ENCODE measurements at regions of chr11 and their contacts with region 1.

Region 1: DNA sequence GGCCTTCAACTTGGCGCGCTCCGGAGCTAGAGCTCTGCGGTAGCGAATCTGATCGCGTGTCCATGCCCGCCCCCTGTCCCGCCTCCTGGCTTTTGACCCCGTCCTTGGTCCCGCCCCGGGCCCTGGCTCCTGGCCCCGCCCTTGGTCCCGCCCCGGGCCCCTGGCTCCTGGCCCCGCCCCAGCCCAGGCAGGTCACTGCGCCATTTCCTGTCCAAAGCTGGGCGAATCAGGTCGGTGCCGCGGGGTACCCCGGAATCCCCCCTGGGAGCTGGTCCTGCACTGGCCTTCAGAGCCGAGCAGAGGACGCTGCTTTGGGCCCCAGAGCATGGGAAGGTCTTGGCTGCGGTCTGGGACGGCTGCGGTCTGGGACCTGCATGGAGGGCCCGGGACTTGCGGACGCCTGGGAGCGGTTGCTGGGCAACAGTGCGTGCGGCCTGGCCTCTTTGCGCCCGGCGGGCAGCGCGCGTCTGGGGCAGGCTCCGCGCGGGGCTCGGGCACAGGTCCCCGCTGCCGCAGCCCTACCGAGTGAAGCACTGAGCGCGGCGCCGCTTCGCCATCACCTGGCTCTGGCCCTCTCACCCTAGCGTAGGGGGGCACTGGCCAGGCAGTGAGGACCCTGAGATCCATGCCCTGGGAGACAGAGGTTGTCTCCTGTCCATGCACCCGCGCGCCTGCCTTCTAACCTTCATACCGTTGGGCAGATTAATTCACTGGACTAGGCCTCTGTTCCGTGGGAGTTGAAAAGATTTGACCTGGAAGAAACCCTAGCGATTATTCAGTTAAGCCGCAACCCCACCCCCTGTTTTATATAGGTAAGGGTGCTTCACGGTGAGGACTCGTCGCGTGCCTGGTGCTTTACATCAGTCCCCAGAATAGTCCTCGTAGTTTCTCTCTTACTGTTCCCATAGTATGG is at the start of gene TTC12:
- DNase-seq: peak; percentile 81 to 95 (median 89)
- ATAC-seq: peak; percentile 100
- H3K4me3 ChIP-seq: peak within 1 kb of the TSS; percentile 78
- H3K4me3 Mint-ChIP-seq: peak within 1 kb of the TSS; percentile 77 to 93 (median 88)
- H3K27ac ChIP-seq: peak within 1 kb of the TSS; percentile 91
- H3K27ac Mint-ChIP-seq: peak within 1 kb of the TSS; percentile 75 to 95 (median 92)
- H3K4me1 ChIP-seq: peaks cover 10 to 16% of the 10 kb centered on the region in 2 donors
- H3K4me1 Mint-ChIP-seq: peaks cover 18 to 58% (median 49%) of the 10 kb centered on the region in 7 donors
- H3K27me3 ChIP-seq: no peaks in the 10 kb centered on the region
- H3K27me3 Mint-ChIP-seq: peaks cover 0 to 3% (median 0%) of the 10 kb centered on the region in 5 donors
- total RNA-seq, gene TTC12: 14.1 to 84.5 (median 58.2) TPM

Region 2: DNA sequence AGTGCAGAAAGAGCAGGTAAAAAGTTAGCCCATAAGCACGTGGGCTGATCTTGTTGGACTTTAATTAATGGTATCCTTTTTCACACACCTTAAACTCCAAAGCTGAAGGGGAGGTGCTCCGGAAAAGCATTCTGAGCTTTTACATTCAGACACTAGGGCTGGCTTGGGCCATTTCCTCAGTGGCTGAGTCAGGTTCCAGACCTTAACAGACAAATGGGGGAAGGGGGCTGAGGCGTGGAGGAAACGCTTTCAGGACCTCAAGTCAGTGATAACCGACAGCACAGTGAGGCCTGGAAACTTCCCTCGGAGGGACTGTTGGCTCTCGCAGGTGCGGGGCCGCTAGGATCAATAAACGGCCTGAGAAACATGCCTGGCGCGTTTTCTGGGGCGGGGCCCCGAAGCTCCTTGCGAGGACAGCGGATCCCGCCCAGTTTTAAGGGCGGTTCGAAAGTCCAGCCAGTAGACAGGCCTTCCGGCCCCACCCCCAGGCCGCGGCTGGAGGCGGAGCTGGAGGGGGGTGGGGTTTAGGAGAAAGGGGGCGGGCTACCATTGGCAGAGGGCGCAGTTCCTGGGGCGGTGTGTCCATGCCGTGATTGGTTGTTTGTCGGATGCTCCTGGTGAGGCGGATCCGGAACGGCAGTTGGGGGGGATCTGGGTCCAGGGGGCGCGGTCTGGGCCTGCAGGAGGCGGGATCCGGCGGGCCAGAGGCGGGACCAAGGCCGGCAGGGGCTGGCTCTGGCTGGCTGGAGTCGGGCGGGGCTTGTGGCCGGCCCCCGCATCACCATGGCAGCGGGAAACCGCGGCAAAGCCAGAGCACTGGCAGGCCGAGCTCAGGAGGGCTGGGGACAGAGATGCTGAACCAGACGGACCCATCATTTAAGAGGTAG is 1387.9 kb before region 1 on chr11:
- CTCF ChIA-PET with region 1: no interaction called
- POLR2A ChIA-PET with region 1: no interaction called
- intact Hi-C with region 1: loop called in 1 of 2 experiments (anchors 5 kb)
- DNase-seq: peak; percentile 91 to 98 (median 96)
- ATAC-seq: peak; percentile 96
- H3K4me3 ChIP-seq: peak overlapping the region; percentile 61
- H3K4me3 Mint-ChIP-seq: peak overlapping the region; percentile 76 to 91 (median 87)
- H3K27ac ChIP-seq: peak overlapping the region; percentile 76
- H3K27ac Mint-ChIP-seq: peak overlapping the region; percentile 83 to 96 (median 92)
- H3K4me1 ChIP-seq: peaks cover 0 to 5% of the 10 kb centered on the region in 2 donors
- H3K4me1 Mint-ChIP-seq: peaks cover 0 to 19% (median 16%) of the 10 kb centered on the region in 7 donors
- H3K27me3 ChIP-seq: no peaks in the 10 kb centered on the region
- H3K27me3 Mint-ChIP-seq: peaks cover 0 to 5% (median 0%) of the 10 kb centered on the region in 5 donors

Region 3: DNA sequence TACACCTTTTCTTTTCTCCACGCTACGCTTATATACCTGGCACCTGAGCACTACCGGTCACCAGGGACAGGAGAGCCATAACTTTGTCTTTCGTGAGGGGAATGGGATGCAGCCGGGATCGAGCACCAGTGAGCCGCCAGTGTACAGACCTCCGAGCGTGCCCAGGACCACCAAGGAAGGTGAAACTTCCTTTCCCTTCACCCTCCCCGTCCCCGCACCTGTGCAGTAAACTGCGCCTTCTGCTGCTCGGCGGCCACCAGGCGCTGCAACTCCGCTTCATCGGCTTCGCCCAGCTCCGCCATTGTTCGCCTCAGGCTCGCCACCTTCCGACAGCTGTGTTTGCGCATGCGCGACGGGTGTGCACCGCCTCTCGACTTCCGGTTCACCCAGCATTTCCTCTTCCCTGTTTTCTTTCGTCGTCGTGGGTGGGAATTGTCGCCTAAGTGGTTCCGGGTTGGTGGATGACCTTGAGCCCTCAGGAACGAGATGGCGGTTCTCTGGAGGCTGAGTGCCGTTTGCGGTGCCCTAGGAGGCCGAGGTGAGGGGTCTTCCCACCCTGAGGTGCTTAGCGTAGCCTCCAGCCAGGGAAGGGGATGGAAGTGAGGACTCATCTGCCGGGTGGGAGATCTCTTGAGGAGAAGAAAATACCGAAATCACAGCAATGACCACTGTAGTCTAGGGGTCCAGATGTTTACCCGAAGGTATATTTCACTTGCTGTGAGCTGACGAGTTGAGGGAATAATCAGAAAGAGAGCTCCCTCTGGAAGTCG is 1228.0 kb before region 1 on chr11 and contains the starts of genes SDHD and TIMM8B:
- CTCF ChIA-PET with region 1: no interaction called
- POLR2A ChIA-PET with region 1: interaction called, 9 read pairs
- intact Hi-C with region 1: loop called (anchors 1 kb)
- DNase-seq: peak; percentile 90 to 98 (median 97)
- ATAC-seq: peak; percentile 94
- H3K4me3 ChIP-seq: peak within 1 kb of the TSS; percentile 99
- H3K4me3 Mint-ChIP-seq: peak within 1 kb of the TSS; percentile 90 to 100 (median 98)
- H3K27ac ChIP-seq: peak within 1 kb of the TSS; percentile 76
- H3K27ac Mint-ChIP-seq: peak within 1 kb of the TSS; percentile 92 to 99 (median 96)
- H3K4me1 ChIP-seq: peaks cover 21 to 23% of the 10 kb centered on the region in 2 donors
- H3K4me1 Mint-ChIP-seq: peaks cover 44 to 69% (median 62%) of the 10 kb centered on the region in 7 donors
- H3K27me3 ChIP-seq: no peaks in the 10 kb centered on the region
- H3K27me3 Mint-ChIP-seq: peaks cover 0 to 2% (median 0%) of the 10 kb centered on the region in 5 donors
- total RNA-seq, gene SDHD: 39.6 to 84.4 (median 65.8) TPM
- total RNA-seq, gene TIMM8B: 15.5 to 61.1 (median 24.3) TPM

Region 4: GRCh38 chr11:113242767-113243397 is 71.8 kb before region 1 on chr11:
- CTCF ChIA-PET with region 1: no interaction called
- POLR2A ChIA-PET with region 1: no interaction called
- intact Hi-C with region 1: loop called in 1 of 2 experiments (anchors 2 kb)
- DNase-seq: peak in 4 of 9 donors; percentile 3 to 23 (median 16)
- ATAC-seq: peak; percentile 38
- H3K4me3 ChIP-seq: peak overlapping the region; percentile 30
- H3K4me3 Mint-ChIP-seq: peak overlapping the region in 9 of 10 donors; percentile 24 to 81 (median 64)
- H3K27ac ChIP-seq: no peak overlapping the region
- H3K27ac Mint-ChIP-seq: peak overlapping the region in 3 of 9 donors; percentile 26 to 86 (median 85)
- H3K4me1 ChIP-seq: no peaks in the 10 kb centered on the region
- H3K4me1 Mint-ChIP-seq: peaks cover 0 to 16% (median 7%) of the 10 kb centered on the region in 7 donors
- H3K27me3 ChIP-seq: no peaks in the 10 kb centered on the region
- H3K27me3 Mint-ChIP-seq: peaks cover 21 to 51% (median 37%) of the 10 kb centered on the region in 5 donors

Region 5: DNA sequence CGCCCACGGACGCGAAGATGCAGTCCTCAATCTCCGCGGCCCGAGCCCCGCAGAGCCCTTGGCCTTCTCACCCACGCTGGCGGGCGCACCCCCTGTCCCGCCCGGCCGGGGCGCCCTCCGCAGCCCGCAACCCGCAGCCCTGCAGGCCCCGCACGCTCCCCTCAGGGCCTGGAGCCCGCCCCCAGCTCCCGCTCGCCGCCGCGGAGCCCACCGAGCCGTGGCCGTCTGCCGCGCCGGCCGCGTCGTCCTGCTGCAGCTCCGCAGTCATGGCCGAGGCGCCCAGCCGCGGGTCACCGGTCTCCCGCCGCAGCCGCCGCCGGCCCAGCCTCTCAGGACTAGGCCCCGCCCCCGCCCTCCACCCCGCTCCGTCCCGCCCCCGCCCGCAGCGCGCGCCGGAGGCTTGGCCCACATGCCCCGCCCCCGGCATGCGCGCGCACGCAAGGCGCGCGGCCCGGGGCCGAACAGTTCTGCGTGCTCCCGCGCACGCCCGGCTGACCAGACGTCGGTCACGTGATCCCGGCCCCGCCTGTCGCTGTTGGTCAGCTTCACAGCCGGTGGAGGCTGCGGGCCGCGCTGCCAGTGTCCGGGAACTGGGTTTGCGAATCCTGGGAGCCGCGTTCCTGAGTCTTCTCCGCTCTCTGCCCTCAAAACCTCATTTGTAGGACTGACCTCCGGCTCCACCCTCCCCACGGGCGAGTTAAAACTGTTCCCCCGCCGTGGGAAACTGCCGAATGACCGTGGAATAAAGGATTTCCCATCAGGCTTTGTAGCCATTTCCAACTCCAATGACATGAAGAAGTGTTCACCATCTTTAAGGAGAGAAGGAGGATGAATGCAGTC is 560.8 kb after region 1 on chr11 and contains the start of gene USP28:
- CTCF ChIA-PET with region 1: no interaction called
- POLR2A ChIA-PET with region 1: no interaction called
- intact Hi-C with region 1: loop called (anchors 1 kb)
- DNase-seq: peak; percentile 49 to 92 (median 73)
- ATAC-seq: peak; percentile 97
- H3K4me3 ChIP-seq: peak within 1 kb of the TSS; percentile 79
- H3K4me3 Mint-ChIP-seq: peak within 1 kb of the TSS; percentile 88 to 100 (median 98)
- H3K27ac ChIP-seq: peak within 1 kb of the TSS; percentile 78
- H3K27ac Mint-ChIP-seq: peak within 1 kb of the TSS; percentile 91 to 99 (median 98)
- H3K4me1 ChIP-seq: no peaks in the 10 kb centered on the region
- H3K4me1 Mint-ChIP-seq: peaks cover 34 to 59% (median 54%) of the 10 kb centered on the region in 7 donors
- H3K27me3 ChIP-seq: no peaks in the 10 kb centered on the region
- H3K27me3 Mint-ChIP-seq: no peaks in the 10 kb centered on the region
- total RNA-seq, gene USP28: 12.0 to 50.3 (median 19.0) TPM

Region 6: DNA sequence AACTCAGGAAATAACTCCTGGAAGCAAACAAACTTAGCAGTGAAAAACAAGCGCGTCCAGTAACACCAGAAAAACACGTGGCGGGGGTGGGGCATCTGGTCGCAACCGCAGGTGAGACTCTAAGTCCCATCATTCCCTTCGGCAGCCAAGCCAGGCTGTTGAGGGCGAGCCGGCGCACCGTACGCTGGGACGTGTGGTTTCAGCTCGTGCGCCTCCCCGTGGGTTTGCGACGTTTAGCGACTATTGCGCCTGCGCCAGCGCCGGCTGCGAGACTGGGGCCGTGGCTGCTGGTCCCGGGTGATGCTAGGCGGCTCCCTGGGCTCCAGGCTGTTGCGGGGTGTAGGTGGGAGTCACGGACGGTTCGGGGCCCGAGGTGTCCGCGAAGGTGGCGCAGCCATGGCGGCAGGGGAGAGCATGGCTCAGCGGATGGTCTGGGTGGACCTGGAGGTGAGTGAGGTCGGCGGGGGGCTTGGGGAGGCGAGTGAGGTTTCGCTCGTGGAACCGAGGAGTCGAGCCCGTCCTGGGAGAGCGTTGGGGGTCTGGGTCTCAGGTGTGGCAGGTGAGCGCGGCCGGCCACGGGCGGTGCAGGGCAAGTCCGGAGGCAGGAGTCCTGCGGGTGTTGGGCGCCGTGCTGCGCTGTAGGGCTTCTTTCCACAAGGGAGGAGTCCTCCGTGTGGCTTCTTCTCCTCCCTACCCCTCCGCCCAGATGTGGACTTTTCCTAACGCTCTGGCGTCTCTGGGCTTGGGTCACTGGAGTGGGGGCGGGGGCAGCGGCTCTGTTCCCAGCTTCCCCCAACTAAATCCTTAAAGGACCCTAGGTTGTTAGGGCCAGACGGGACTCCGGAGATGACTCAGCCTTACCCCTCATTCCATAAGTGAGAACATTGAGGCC is 1124.8 kb after region 1 on chr11 and contains the start of gene REXO2:
- CTCF ChIA-PET with region 1: no interaction called
- POLR2A ChIA-PET with region 1: no interaction called
- intact Hi-C with region 1: loop called in 1 of 2 experiments (anchors 10 kb)
- DNase-seq: peak; percentile 89 to 94 (median 92)
- ATAC-seq: peak; percentile 100
- H3K4me3 ChIP-seq: peak within 1 kb of the TSS; percentile 96
- H3K4me3 Mint-ChIP-seq: peak within 1 kb of the TSS; percentile 92 to 98 (median 96)
- H3K27ac ChIP-seq: peak within 1 kb of the TSS; percentile 79
- H3K27ac Mint-ChIP-seq: peak within 1 kb of the TSS; percentile 84 to 95 (median 93)
- H3K4me1 ChIP-seq: peaks cover 18 to 20% of the 10 kb centered on the region in 2 donors
- H3K4me1 Mint-ChIP-seq: peaks cover 22 to 56% (median 36%) of the 10 kb centered on the region in 7 donors
- H3K27me3 ChIP-seq: no peaks in the 10 kb centered on the region
- H3K27me3 Mint-ChIP-seq: peaks cover 0 to 4% (median 0%) of the 10 kb centered on the region in 5 donors
- total RNA-seq, gene REXO2: 33.8 to 105 (median 56.0) TPM

Measured in naive thymus-derived CD4-positive, alpha-beta T cell (primary cell).